BJ (cell line): ENCODE measurements at regions of chr15 and their contacts with region 1.

Region 1: DNA sequence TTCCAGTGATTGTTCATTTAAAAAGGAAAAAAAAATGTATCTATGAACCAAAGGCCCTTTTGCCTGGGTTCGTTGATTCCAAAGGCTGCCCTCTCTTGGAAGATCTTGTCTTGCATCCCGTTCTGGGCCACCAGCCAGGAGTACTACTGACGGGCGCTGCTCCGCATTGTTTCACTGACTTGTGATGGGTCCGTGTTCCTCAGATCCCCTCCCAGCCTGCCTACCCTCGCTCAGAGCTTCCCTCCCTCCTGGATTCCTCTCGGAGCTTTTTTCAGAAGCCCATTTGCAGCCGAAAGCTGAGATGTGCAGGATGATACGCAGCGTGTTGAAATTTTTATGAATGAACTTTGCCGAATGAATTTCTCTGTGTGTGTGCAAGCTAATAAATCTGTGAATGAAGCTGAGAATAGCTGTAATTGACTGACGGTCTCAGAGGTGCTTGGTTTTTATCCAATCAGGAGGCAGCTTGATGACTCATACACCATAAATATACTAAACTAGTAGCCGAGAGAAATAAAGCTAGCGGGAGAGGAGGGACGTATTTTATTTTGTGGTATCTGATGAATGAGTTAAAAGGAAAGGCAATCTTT is at the start of gene SHC4:
- DNase-seq: no peak
- H3K4me3 ChIP-seq: peak within 1 kb of the TSS; percentile 53
- H3K27me3 ChIP-seq: no peaks in the 10 kb centered on the region
- CTCF ChIP-seq: peak; percentile 44
- polyA plus RNA-seq, gene SHC4: 0.74 and 0.86 TPM in 2 replicates

Region 2: DNA sequence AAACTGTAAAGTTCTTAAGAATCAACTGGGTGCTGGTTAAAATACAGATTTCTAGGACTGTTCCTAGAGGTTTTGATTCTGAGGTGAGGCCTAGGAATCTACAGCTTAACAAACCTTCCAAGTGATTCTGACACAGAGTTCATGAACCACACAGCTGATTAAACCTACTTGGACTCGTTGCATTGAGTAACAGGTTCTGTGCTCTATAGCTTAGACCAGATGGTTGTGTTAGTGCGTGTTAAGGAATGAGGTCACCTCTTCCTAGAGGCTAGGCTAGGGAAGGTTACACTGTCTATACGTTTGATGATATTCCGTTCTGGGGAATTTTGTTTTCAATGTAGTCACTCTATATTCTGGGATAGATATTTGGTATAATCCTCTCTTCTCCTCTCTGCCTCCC is 63.8 kb before region 1 on chr15:
- CTCF ChIA-PET with region 1: no interaction called
- POLR2A ChIA-PET with region 1: no interaction called
- DNase-seq: no peak
- H3K4me3 ChIP-seq: no peak overlapping the region
- H3K27me3 ChIP-seq: no peaks in the 10 kb centered on the region
- CTCF ChIP-seq: no peak

Region 3: DNA sequence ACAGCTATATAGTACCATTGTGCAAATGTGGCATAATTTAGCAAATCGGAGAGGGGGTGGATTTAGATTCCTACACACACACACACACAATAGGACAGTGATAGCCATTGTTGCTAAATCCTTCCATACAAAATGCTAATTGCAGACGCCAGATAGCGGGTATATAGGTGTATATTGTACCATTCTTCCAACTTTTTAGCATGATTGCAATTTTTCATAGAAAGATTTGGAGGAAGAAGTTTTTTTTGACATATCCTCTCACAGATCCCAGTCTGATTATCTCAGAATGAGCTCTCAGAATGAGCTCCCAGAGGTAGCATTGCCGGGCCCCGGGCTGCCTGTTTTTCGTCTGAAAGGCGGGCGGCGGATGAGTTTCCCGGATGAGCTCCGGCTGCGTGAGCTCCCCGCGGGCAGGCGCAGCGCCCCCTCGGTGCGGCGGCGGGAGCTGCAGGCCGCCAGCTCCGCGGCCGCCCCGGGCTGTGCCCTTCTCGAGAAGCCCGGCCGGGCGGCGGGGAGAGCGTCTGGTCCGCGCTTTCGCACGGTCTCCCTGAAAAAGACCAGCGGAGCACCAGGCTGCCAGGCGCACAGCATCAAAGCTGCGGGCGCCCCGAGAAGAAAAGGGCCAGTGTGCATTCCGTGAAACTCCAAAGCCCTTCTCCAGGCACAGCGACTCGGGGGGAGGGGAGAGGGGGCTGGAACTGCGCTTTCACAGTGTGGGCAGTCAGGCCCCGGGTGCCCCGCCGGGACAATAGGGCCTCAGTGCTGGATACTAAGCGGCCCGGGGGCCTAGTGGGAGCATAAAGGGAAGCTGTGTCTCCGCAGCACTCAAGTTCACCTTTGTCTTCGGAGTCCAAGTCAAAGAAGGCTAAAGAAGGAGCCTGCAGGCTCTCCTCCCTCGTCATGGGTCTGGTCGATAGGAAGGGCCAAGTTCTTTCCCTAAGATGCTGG is 12.1 kb after region 1 on chr15:
- CTCF ChIA-PET with region 1: interaction called, 48 read pairs
- POLR2A ChIA-PET with region 1: no interaction called
- DNase-seq: no peak
- H3K4me3 ChIP-seq: peak overlapping the region; percentile 36
- H3K27me3 ChIP-seq: no peaks in the 10 kb centered on the region; the same call in 1 of the 2 replicates
- CTCF ChIP-seq: peak; percentile 65

Region 4: DNA sequence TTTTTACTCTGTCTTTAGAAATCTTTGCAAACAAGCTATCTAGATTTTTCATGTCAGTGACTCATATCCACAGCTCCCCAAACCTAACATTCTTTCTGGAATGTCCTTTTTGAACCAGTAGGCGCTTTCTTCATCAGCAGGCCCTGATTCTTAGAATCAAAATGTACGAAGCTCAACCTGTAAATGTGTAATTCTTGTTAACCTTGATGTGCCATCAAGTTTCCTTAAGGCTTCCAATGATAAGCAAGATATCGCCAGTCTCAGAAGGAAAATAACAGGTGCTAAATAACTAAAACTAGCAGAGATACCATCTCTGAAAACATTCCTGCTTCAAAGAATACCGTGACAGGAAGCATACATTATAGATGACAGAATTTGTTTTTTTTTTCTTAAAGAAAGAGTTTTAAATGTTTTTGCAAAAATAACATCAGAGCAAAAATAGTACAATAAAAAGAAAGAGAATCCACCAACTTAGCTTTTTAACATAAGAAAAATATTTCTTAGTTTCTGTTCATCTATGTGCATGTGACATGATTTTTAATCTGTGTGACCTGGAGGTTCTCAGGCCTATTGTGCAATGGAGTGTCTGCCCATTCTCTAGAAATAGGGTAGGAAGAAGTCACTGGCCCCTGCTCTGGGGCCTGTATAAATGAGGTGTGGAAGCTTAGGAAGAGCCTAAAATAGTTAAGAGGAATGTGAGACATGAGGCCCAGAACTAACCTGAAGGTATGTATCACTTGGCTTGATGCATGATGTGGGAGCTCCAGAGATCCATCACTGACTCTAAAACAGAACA is 97.3 kb after region 1 on chr15:
- CTCF ChIA-PET with region 1: no interaction called
- POLR2A ChIA-PET with region 1: no interaction called
- DNase-seq: no peak
- H3K4me3 ChIP-seq: no peak overlapping the region
- H3K27me3 ChIP-seq: no peaks in the 10 kb centered on the region
- CTCF ChIP-seq: peak; percentile 5; the same call in 1 of the 2 replicates